Right ventricle myocardium inferior (tissue), 1 donor: ENCODE measurements at regions of chr1 and their contacts with region 1.

Region 1: DNA sequence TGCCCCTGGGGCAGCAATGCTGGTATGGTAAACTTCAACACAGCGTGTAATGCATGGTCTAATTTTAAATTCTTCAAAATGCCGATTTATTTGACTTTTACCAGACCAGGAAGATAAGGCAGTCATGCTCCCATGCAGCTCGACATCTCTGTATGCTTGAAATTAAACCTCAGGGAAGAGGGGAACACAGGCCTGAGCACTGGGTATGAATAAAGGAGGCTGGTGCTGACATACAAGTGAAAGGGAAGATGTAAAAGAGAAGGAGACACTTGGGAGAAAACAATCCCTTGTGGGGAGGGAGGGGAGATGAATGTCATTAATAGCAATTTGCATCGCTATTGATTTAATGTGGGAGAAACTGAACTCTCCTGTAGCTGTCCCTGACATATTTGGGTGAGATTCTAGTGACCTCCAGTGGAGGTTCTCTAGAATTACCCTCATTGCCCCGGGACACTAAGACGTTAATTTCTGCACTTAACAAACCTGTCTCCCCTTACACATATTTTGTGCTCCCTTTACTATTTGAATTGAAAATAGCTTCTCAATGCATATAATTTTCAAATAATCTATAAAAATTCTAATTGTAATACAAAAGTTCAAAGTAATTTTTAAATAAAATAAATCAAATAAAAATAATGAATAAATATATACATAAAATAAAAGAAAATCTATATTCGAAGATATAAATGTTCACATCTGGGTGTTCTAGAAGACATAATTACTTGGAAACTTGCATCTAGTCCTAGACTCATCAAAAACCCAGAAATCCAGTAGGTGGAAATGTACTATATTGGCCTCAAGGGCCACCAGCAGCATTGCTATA is 283.1 kb downstream of the LMX1A start:
- DNase-seq: no peak
- ATAC-seq: peak; percentile 48

Region 2: DNA sequence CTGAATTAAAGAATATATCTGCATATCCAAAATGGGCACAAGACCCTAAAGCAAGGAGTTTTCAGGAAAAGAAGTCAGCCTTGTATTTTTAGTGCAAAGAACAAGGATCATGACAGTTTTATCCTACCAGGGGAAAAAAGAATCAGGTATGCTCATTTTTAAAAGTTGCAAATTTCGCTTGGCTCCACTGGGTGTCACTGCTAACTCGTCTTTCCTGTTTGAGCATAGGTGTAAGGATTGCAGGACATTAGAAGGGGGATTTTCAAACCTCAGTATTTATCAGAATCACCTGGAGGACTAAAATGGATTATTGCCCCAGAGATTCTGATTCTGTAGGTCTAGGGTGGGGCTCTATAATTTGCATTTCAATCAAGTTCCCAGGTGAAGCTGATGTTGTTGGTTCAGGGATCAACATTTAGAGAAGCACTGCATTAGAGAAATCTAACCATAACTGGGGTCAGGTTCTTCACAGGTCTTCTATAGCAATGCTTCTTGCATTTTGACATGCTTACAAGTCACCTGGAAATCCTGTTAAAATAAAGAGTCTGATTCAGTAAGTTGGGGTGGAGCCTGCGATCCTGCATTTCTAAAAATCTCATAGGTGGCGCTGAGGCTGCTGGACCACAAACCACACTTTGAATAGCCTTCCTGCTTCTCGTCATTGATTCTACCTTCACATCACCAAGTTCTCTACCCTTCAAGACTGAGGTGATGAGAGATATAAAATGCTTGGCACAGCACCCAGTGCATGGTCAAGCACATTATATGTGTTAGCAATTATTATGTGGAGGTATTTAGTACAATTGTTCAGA is 1712.1 kb before region 1 on chr1:
- intact Hi-C with region 1: loop called (anchors 10 kb)
- DNase-seq: no peak
- ATAC-seq: no peak

Region 3: DNA sequence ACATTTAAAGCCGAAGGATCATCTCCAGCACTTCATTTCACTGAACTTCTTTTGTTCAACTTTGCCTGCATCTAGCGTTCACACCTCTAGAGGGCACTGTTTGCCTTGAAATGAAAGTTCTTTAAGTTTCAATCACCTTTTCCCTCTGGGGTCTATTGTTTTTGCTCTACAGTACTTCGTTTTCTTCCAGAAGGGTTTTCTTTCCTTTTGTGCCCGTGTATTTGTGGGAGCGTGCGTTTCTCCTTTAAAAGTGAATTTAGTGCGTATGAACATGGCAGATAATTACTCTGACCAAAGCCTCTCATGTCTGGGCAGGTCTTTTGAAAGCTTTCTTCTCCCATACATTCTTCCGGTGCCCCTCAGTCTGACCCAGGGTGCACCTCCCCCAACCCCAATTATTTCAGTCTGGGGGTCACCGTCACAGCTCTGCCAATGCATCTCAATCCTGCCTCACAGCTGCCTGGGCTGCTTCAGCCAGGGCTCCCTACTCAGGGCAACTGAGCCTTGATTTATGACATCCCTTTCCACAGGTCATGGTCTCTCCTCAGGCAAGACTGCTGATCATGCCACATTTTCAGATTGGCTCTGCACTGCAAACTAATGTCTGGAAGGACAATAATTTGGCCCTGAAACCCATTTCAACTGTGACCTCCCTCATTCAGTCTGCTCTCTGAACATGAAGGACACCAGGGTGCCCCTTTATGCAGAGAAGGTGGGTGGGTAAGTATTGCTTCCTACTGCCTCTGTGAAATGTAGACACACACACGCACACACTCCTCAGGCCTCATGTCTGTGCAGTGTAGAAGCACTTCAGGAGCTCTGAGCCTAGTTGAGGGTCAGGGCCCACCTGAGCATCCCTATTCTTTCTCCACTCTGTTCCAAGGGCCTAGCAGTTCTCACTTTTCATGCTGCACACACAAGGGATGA is 1663.1 kb before region 1 on chr1:
- intact Hi-C with region 1: loop called (anchors 5 kb)
- DNase-seq: no peak
- ATAC-seq: no peak

Region 4: GRCh38 chr1:163528710-163529348 is 1544.6 kb before region 1 on chr1:
- intact Hi-C with region 1: loop called (anchors 2 kb)
- DNase-seq: no peak
- ATAC-seq: no peak

Region 5: GRCh38 chr1:164726235-164726634 is 347.2 kb before region 1 on chr1:
- intact Hi-C with region 1: no loop called
- DNase-seq: no peak
- ATAC-seq: no peak

Region 6: DNA sequence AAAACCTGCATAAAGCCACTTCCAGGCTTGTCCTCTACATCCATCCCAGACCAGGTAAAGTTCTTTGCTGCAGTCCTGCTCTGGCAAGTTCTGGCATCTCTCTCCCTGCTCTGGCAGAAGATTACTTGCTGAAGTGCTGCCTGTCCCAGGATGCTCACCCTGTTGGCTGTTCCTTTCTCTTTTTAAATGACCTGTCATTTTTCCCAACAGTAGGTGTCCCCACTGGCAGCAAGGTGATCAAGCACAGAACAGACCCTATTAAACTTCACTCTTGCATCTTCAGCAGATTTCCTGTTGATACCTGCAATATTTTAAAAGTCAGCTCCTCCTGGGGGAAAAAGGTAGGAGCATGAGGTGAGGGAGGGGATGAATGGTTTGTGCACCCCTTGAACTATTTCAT is 181.8 kb before region 1 on chr1:
- intact Hi-C with region 1: no loop called
- DNase-seq: no peak
- ATAC-seq: no peak